Mammary epithelial cell (primary cell): ENCODE measurements at regions of chr14 and their contacts with region 1.

Region 1: GRCh38 chr14:95922080-95922479 is 45.4 kb downstream of the TUNAR start:
- DNase-seq: no peak
- H3K4me3 ChIP-seq: no peak overlapping the region
- H3K27ac ChIP-seq: no peak overlapping the region
- H3K4me1 ChIP-seq: no peaks in the 10 kb centered on the region
- H3K27me3 ChIP-seq: peaks cover 2% of the 10 kb centered on the region
- CTCF ChIP-seq: no peak

Region 2: GRCh38 chr14:95956601-95957460 is 34.8 kb after region 1 on chr14:
- CTCF ChIA-PET with region 1: no interaction called
- dilution Hi-C with region 1: loop called (anchors 5 kb)
- in situ Hi-C with region 1: no loop called
- intact Hi-C with region 1: no loop called
- DNase-seq: no peak
- H3K4me3 ChIP-seq: no peak overlapping the region
- H3K27ac ChIP-seq: no peak overlapping the region
- H3K4me1 ChIP-seq: no peaks in the 10 kb centered on the region
- H3K27me3 ChIP-seq: no peaks in the 10 kb centered on the region
- CTCF ChIP-seq: no peak